Panc1 (cell line): ENCODE measurements at regions of chr21 and their contacts with region 1.

Region 1: DNA sequence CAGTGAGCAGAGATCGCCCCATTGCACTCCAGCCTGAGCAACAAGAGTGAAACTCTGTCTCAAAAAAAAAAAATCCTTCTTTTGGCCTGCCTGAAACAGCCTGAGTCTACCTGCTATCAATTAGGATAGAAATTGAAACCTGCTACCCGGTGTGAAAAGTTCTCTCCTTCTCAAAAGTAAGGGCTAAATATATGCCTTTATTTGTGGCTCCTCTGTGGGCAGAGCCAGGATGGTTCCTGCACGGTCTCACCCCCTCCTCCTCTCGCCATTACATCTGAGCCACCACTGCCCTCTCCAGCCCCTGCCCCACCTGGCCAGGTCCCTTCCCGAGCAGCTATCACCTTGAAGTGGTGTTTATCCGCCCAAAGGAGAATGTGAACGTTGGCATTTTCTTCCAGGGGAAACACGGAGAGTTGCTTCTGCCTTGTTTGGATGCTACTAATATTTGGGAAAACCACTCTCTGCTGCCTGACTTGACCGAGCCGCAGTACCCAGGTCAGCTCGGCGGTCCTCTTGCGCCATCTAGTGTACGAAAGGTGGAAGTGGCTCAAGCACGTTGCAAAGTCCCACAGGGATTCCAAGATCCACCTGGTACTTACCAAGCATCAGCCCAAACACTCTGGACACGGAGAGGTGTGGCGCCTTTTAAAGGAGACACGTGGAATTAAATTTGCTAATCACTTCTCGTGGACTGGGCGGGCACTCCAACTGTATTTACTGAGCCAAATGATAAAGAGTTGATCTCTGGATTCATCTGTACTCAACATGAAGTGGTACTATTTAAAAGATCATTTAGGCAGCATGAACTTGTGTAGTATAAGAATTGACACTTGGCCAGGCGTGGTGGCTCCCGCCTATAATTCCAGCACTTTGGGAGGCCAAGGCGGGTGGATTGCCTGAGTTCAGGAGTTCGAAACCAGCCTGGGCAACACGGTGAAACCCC is 31.9 kb downstream of the SETD4 start:
- DNase-seq: peak; percentile 65
- ATAC-seq: peak; percentile 97
- H3K4me3 ChIP-seq: no peak overlapping the region
- H3K27ac ChIP-seq: no peak overlapping the region
- H3K4me1 ChIP-seq: no peaks in the 10 kb centered on the region
- H3K27me3 ChIP-seq: no peaks in the 10 kb centered on the region
- CTCF ChIP-seq: peak; percentile 90

Region 2: GRCh38 chr21:35940074-35940927 is 88.1 kb before region 1 on chr21:
- CTCF ChIA-PET with region 1: no interaction called
- POLR2A ChIA-PET with region 1: no interaction called
- in situ Hi-C with region 1: no loop called
- intact Hi-C with region 1: loop called (anchors 10 kb)
- DNase-seq: peak; percentile 38
- ATAC-seq: peak; percentile 96
- H3K4me3 ChIP-seq: no peak overlapping the region
- H3K27ac ChIP-seq: no peak overlapping the region
- H3K4me1 ChIP-seq: 0 out of 2 replicates have a peak, but pooled peaks cover 4% of the 10 kb centered on the region
- H3K27me3 ChIP-seq: no peaks in the 10 kb centered on the region; the same call in 1 of the 2 replicates
- CTCF ChIP-seq: peak; percentile 78

Region 3: DNA sequence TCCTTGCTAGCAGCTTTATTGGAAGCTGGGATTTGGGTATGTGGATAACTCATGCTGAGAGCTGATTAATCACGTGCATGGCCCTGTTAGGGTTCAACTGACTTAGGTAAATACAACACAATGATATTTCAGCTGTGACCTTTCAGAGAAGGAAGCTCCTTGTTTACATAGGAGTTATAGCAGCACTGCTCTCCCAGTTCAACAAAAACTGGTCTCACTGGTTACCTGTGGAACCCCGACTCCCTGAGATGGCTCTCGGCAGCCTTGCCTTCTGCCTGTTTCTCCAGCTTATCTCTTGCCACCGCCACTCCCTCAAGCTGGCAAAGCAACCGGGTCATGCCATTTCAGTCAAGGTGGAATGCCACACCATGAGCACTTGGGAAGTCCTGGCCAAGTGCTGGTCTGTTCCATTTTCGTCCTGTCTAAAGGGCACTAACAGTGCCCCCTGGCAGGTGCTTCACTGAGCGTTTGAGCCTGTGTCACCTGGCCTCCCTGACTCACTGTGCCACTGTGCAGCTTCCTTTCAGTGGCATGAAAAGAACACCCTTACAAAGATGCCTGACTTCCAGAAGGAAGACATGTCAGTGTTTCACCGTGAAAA is 159.8 kb after region 1 on chr21:
- CTCF ChIA-PET with region 1: no interaction called
- POLR2A ChIA-PET with region 1: no interaction called
- in situ Hi-C with region 1: no loop called
- intact Hi-C with region 1: no loop called
- DNase-seq: no peak
- ATAC-seq: peak; percentile 48; the same call in 1 of the 2 replicates
- H3K4me3 ChIP-seq: no peak overlapping the region
- H3K27ac ChIP-seq: no peak overlapping the region
- H3K4me1 ChIP-seq: peaks cover 9% of the 10 kb centered on the region
- H3K27me3 ChIP-seq: no peaks in the 10 kb centered on the region
- CTCF ChIP-seq: no peak

Region 4: DNA sequence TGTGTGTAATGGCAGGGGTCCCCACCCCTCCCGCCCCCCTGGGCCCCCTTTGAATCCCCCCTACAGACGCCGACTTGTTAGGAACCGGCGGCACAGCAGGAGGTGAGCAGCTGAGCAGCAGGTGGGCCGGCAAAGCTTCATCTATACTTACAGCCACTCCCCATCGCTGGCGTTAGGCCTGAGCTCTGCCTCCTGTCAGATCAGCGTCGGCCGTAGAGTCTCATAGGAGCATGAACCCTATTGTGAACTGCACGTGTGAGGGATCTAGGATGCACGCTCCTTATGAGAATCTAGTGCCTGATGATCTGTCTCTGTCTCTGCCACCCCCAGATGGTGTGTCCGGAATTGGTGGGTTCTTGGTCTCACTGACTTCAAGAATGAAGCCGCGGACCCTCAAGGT is 1253.6 kb after region 1 on chr21:
- CTCF ChIA-PET with region 1: no interaction called
- POLR2A ChIA-PET with region 1: no interaction called
- in situ Hi-C with region 1: no loop called
- intact Hi-C with region 1: no loop called
- DNase-seq: no peak
- ATAC-seq: no peak
- H3K4me3 ChIP-seq: no peak overlapping the region
- H3K27ac ChIP-seq: no peak overlapping the region
- H3K4me1 ChIP-seq: no peaks in the 10 kb centered on the region
- H3K27me3 ChIP-seq: no peaks in the 10 kb centered on the region
- CTCF ChIP-seq: no peak